Mucosa of descending colon (tissue), 3 donors: ENCODE measurements at regions of chr5 and their contacts with region 1.

Region 1: DNA sequence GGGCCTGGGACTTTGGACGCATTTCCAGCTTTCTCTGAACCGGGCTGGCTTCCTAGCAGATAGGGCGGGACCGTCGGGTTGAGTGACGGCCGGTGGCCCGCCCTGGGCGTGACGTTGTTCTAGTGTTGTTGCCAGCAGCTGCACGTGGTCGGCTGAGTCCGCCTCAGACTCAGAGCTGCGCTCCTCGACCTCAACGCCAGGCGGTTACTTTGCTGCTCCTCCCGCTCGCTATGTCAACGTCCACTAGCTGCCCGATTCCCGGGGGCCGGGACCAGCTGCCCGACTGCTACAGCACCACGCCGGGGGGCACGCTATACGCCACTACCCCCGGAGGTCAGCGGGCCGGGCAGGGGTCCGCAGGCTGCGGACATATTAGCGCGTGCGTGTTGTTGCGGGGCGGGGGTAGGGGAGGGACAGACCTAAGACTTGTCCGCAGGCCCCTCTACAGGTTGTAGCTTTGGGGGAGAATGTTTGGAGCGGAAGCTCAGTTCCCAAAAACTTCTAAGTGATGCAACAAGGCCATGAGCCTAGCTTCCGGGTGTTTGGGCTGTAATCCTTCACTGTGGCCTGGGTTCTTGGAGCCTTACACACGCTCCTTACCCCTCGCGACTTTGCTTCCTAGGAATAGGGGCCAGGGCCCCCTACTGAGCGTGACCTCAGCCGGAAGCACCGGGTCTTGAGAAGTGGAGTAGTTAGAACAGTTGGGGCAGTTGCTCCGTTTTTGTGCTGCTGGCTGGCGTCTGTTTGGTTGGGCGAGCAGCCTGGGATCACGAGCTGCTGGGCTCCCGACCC is at the start of gene EIF4EBP3:
- DNase-seq: peak; percentile 98 to 99 (median 98)
- ATAC-seq: peak; percentile 89
- H3K4me3 ChIP-seq: peak within 1 kb of the TSS; percentile 14
- H3K4me1 ChIP-seq: peaks cover 42% of the 10 kb centered on the region
- CTCF ChIP-seq: peak; percentile 28
- total RNA-seq, gene EIF4EBP3: 18.5 to 51.9 (median 23.1) TPM

Region 2: GRCh38 chr5:140362860-140363630 is 184.7 kb before region 1 on chr5:
- intact Hi-C with region 1: loop called in 1 of 2 experiments (anchors 10 kb)
- DNase-seq: peak; percentile 84 to 92 (median 91)
- ATAC-seq: peak; percentile 87
- H3K4me3 ChIP-seq: no peak overlapping the region
- H3K4me1 ChIP-seq: peaks cover 13% of the 10 kb centered on the region
- CTCF ChIP-seq: peak; percentile 93

Region 3: GRCh38 chr5:140622301-140622700 is 74.6 kb after region 1 on chr5:
- intact Hi-C with region 1: no loop called
- DNase-seq: no peak
- ATAC-seq: no peak
- H3K4me3 ChIP-seq: no peak overlapping the region
- H3K4me1 ChIP-seq: no peaks in the 10 kb centered on the region
- CTCF ChIP-seq: no peak

Region 4: GRCh38 chr5:140639148-140639979 is 91.7 kb after region 1 on chr5 and contains the start of gene TMCO6:
- intact Hi-C with region 1: loop called in 1 of 2 experiments (anchors 10 kb)
- DNase-seq: peak; percentile 99
- ATAC-seq: peak; percentile 99
- H3K4me3 ChIP-seq: peak within 1 kb of the TSS; percentile 59
- H3K4me1 ChIP-seq: peaks cover 12% of the 10 kb centered on the region
- CTCF ChIP-seq: peak; percentile 62
- total RNA-seq, gene TMCO6: 13.6 to 21.7 (median 16.8) TPM